Activated CD4-positive, alpha-beta T cell treated with anti-CD3 and anti-CD28 coated beads, Interleukin-2, amount 10 ng/mL, durations not matched to agents 24 days and 14 days (primary cell): ENCODE measurements at regions of chrX and their contacts with region 1.

Region 1: GRCh38 chrX:318739-319578 is at the start of gene GTPBP6:
- DNase-seq: peak; percentile 100
- H3K4me3 Mint-ChIP-seq: peak within 1 kb of the TSS; percentile 96
- H3K27ac Mint-ChIP-seq: peak within 1 kb of the TSS; percentile 97
- H3K4me1 Mint-ChIP-seq: peaks cover 23% of the 10 kb centered on the region
- H3K27me3 Mint-ChIP-seq: peaks cover 4% of the 10 kb centered on the region
- total RNA-seq, gene GTPBP6: 66.3 and 70.5 TPM in 2 replicates

Region 2: GRCh38 chrX:283115-283845 is 35.7 kb before region 1 on chrX:
- intact Hi-C with region 1: loop called (anchors 1 kb)
- DNase-seq: peak; percentile 97
- H3K4me3 Mint-ChIP-seq: peak overlapping the region; percentile 97
- H3K27ac Mint-ChIP-seq: peak overlapping the region; percentile 99
- H3K4me1 Mint-ChIP-seq: peaks cover 23% of the 10 kb centered on the region
- H3K27me3 Mint-ChIP-seq: no peaks in the 10 kb centered on the region

Region 3: DNA sequence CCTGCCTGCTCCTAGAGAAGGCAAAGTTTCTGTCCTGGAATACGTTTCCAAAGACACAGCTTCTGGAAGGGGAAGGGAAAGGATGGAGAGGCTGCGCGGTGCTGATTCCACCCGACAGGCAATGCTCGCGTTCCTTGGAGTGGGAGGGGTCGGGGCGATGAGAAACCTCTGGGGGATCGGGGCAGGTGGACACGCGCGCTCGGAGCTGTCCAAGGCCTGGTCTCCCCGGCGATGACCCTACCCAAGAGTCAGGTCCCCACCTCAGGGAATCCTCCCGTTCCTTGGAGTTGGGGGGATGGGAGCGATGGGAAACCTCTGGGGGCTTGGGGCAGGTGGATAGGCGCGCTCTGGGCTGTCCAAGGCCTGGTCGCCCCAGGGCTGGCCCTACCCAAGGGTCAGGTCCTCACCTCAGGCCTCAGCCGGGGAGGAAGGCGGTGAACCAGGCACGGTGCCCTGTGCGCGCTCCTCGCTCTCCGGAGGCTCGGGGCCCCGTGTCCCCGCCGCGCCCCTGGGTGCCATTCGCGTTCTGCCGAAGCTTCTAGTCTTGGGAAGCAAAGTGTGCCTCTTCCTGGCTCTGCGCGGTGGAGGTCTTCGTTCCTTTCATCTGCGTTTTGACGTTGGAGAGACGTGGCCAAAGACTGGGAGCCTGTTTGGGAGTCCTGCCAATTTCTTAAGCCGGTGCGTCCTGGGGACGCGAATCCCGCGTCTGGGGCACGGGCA is 301.0 kb after region 1 on chrX:
- intact Hi-C with region 1: no loop called
- DNase-seq: peak; percentile 41
- H3K4me3 Mint-ChIP-seq: no peak overlapping the region
- H3K27ac Mint-ChIP-seq: no peak overlapping the region
- H3K4me1 Mint-ChIP-seq: peaks cover 3% of the 10 kb centered on the region
- H3K27me3 Mint-ChIP-seq: peaks cover 33% of the 10 kb centered on the region

Region 4: DNA sequence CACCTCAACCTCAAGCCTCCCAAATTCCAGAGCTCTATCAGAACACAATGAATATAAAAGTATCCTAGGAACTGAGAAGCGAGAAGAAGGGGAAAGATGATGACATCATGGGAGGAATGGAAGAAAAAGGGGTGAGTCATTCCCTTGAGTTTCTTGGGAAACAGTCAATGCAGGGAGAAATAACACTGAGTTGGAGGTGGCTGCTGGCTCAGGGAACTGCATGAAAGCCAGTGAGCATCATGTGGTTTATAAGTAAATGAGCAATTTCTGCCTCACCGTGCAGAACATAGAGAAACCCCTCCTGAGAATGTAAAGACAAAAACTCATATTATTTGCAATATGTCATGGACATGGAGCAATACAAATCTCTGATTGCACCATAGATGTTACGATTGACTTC is 384.9 kb after region 1 on chrX:
- intact Hi-C with region 1: no loop called
- DNase-seq: no peak
- H3K4me3 Mint-ChIP-seq: no peak overlapping the region
- H3K27ac Mint-ChIP-seq: no peak overlapping the region
- H3K4me1 Mint-ChIP-seq: no peaks in the 10 kb centered on the region
- H3K27me3 Mint-ChIP-seq: no peaks in the 10 kb centered on the region

Region 5: GRCh38 chrX:758917-759316 is 440.0 kb after region 1 on chrX:
- intact Hi-C with region 1: no loop called
- DNase-seq: no peak
- H3K4me3 Mint-ChIP-seq: no peak overlapping the region
- H3K27ac Mint-ChIP-seq: no peak overlapping the region
- H3K4me1 Mint-ChIP-seq: no peaks in the 10 kb centered on the region
- H3K27me3 Mint-ChIP-seq: no peaks in the 10 kb centered on the region

Region 6: GRCh38 chrX:1391707-1392375 is 1072.9 kb after region 1 on chrX and contains the start of gene SLC25A6:
- intact Hi-C with region 1: loop called (anchors 5 kb)
- DNase-seq: peak; percentile 100
- H3K4me3 Mint-ChIP-seq: peak within 1 kb of the TSS; percentile 97
- H3K27ac Mint-ChIP-seq: peak within 1 kb of the TSS; percentile 98
- H3K4me1 Mint-ChIP-seq: peaks cover 36% of the 10 kb centered on the region
- H3K27me3 Mint-ChIP-seq: no peaks in the 10 kb centered on the region
- total RNA-seq, gene SLC25A6: 302 and 306 TPM in 2 replicates